CD4-positive, alpha-beta memory T cell (primary cell): ENCODE measurements at regions of chr6 and their contacts with region 1.

Region 1: GRCh38 chr6:157034436-157035230 is 257.5 kb downstream of the ARID1B start:
- DNase-seq: peak in 4 of 5 donors; percentile 32 to 50 (median 42)
- H3K4me3 ChIP-seq: no peak overlapping the region
- H3K4me3 Mint-ChIP-seq: peak overlapping the region; percentile 64 to 99 (median 73)
- H3K27ac ChIP-seq: no peak overlapping the region
- H3K27ac Mint-ChIP-seq: peak overlapping the region in 6 of 7 donors; percentile 19 to 98 (median 76)
- H3K4me1 ChIP-seq: peaks cover 26% of the 10 kb centered on the region
- H3K4me1 Mint-ChIP-seq: peaks cover 14 to 28% (median 25%) of the 10 kb centered on the region in 4 donors
- H3K27me3 ChIP-seq: no peaks in the 10 kb centered on the region
- H3K27me3 Mint-ChIP-seq: no peaks in the 10 kb centered on the region

Region 2: DNA sequence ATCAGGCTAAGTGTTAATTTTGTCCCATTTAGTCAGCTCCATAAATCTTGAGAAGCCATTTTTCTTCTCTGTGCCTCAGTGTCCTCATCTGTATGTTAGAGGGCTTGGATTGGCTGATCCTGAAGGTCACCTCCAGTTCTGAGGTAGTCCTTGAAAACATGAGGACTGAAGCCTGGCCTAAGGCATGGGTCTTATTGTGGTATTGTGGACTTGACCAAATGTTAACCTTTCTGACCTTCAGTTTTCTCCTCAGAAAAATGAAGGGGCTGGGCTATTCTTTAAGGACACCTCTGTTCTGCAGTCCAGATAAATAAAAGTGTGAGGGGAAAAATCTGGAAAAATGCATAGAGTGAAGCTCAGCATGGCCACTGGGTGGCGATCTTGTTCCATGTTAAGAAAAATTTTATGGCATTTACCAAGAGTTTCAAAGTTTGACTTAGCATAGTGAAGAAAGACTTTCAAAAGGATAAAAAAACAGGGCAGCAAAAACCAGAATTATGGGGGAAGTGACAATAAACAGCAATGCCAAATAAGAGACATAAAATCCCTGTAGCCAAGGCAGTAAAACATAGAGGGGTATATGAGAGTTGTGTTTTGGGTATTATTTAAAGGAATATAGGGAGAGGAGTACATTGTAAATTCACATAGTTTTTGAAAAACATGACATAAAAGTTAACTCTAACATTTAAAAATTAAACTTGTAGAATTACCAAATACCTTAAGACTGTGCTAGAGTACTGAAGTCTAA is 1707.1 kb before region 1 on chr6:
- CTCF ChIA-PET with region 1: no interaction called
- POLR2A ChIA-PET with region 1: no interaction called
- intact Hi-C with region 1: loop called (anchors 5 kb)
- DNase-seq: peak; percentile 47 to 65 (median 62)
- H3K4me3 ChIP-seq: no peak overlapping the region
- H3K4me3 Mint-ChIP-seq: no peak overlapping the region
- H3K27ac ChIP-seq: no peak overlapping the region
- H3K27ac Mint-ChIP-seq: peak overlapping the region in 2 of 7 donors; percentile 0 to 64
- H3K4me1 ChIP-seq: no peaks in the 10 kb centered on the region
- H3K4me1 Mint-ChIP-seq: peaks cover 0 to 5% (median 3%) of the 10 kb centered on the region in 4 donors
- H3K27me3 ChIP-seq: no peaks in the 10 kb centered on the region
- H3K27me3 Mint-ChIP-seq: peaks cover 0 to 1% of the 10 kb centered on the region in 2 donors

Region 3: DNA sequence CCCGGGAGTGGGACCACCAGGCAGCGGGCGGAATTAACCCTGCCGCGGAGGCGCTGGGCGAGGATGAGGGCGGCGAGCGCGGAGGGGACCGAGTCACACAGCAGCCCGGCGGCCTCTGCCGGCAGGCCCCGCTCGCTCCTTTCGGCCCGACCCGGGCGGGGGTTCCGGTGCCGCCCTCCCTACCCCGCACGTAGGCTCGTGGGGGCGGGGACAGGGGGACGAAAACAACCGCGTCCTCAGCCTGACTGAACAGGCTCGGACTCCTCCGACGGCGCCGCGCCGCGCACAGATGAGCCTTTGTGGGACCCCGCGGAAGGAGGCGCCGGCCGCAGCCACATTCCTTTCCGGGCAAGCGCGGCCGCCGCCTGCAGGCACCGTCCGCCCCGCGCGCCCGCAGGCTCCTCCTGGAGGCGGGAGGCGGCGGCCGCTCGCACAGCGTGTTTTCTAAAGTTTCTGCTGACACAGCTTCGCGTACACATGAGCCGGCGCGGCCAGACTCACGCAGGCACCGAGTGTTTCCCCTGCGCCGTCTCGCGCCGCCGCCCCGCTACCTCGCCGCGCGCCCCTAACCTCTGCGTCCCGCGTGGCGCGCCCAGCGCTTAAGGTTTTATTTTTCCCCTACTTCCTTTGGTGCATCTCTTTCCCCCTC is 13.2 kb before region 1 on chr6:
- CTCF ChIA-PET with region 1: interaction called, 7 read pairs
- POLR2A ChIA-PET with region 1: interaction called, 21 read pairs
- intact Hi-C with region 1: loop called (anchors 1 kb)
- DNase-seq: peak; percentile 88 to 93 (median 91)
- H3K4me3 ChIP-seq: peak overlapping the region; percentile 54 to 86
- H3K4me3 Mint-ChIP-seq: peak overlapping the region; percentile 95 to 98 (median 96)
- H3K27ac ChIP-seq: peak overlapping the region; percentile 98
- H3K27ac Mint-ChIP-seq: peak overlapping the region; percentile 97 to 100 (median 99)
- H3K4me1 ChIP-seq: peaks cover 31% of the 10 kb centered on the region
- H3K4me1 Mint-ChIP-seq: peaks cover 30 to 55% (median 44%) of the 10 kb centered on the region in 4 donors
- H3K27me3 ChIP-seq: no peaks in the 10 kb centered on the region
- H3K27me3 Mint-ChIP-seq: no peaks in the 10 kb centered on the region

Region 4: GRCh38 chr6:157045831-157046454 is 11.3 kb after region 1 on chr6:
- CTCF ChIA-PET with region 1: interaction called, 12 read pairs
- POLR2A ChIA-PET with region 1: interaction called, 6 read pairs
- intact Hi-C with region 1: no loop called
- DNase-seq: no peak
- H3K4me3 ChIP-seq: no peak overlapping the region
- H3K4me3 Mint-ChIP-seq: no peak overlapping the region
- H3K27ac ChIP-seq: no peak overlapping the region
- H3K27ac Mint-ChIP-seq: no peak overlapping the region
- H3K4me1 ChIP-seq: no peaks in the 10 kb centered on the region
- H3K4me1 Mint-ChIP-seq: peaks cover 9 to 15% (median 12%) of the 10 kb centered on the region in 4 donors
- H3K27me3 ChIP-seq: no peaks in the 10 kb centered on the region
- H3K27me3 Mint-ChIP-seq: no peaks in the 10 kb centered on the region

Region 5: GRCh38 chr6:157099912-157100593 is 65.4 kb after region 1 on chr6:
- CTCF ChIA-PET with region 1: interaction called, 3 read pairs
- POLR2A ChIA-PET with region 1: no interaction called
- intact Hi-C with region 1: loop called (anchors 1 kb)
- DNase-seq: peak; percentile 49 to 68 (median 59)
- H3K4me3 ChIP-seq: peak overlapping the region in 1 of 2 donors; percentile 0
- H3K4me3 Mint-ChIP-seq: peak overlapping the region; percentile 60 to 81 (median 77)
- H3K27ac ChIP-seq: peak overlapping the region; percentile 44
- H3K27ac Mint-ChIP-seq: peak overlapping the region; percentile 88 to 96 (median 94)
- H3K4me1 ChIP-seq: peaks cover 41% of the 10 kb centered on the region
- H3K4me1 Mint-ChIP-seq: peaks cover 42 to 77% (median 59%) of the 10 kb centered on the region in 4 donors
- H3K27me3 ChIP-seq: no peaks in the 10 kb centered on the region
- H3K27me3 Mint-ChIP-seq: no peaks in the 10 kb centered on the region

Region 6: DNA sequence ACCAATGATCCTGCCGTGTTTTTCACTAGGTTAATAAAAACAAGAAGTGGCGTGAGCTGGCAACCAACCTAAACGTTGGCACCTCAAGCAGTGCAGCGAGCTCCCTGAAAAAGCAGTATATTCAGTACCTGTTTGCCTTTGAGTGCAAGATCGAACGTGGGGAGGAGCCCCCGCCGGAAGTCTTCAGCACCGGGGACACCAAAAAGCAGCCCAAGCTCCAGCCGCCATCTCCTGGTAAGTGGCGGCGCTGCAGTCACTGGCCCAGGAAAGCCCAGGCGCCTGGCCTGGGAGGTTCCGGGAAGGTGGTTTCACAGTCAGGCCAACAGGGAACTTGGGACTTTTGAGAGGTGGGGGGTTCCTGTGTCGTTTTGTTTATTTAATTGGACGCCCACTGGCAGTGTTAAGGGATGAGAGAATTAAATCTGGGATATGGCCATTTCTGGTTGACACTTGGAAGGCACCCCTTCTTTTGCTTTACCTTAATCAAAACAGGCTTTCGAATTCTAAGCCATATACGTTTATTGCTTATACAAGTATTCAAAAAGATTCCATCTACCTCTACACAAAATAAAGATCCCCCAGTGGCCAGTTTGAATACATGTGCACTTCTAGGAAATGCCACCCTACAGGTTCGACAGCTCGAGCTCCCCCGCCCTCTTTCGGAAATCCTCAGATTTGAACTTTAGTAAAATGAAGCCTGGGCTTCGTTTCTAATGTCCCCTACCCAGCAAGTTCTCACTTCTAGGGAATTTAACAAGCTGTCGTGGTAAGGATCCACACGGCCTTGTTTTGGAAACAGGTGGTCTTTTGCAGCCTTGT is 149.8 kb after region 1 on chr6:
- CTCF ChIA-PET with region 1: interaction called, 4 read pairs
- POLR2A ChIA-PET with region 1: interaction called, 3 read pairs
- intact Hi-C with region 1: loop called (anchors 1 kb)
- DNase-seq: peak; percentile 55 to 60 (median 58)
- H3K4me3 ChIP-seq: no peak overlapping the region
- H3K4me3 Mint-ChIP-seq: peak overlapping the region in 4 of 8 donors; percentile 32 to 43 (median 38)
- H3K27ac ChIP-seq: no peak overlapping the region
- H3K27ac Mint-ChIP-seq: peak overlapping the region in 4 of 7 donors; percentile 59 to 70 (median 62)
- H3K4me1 ChIP-seq: peaks cover 18% of the 10 kb centered on the region
- H3K4me1 Mint-ChIP-seq: peaks cover 11 to 36% (median 23%) of the 10 kb centered on the region in 4 donors
- H3K27me3 ChIP-seq: no peaks in the 10 kb centered on the region
- H3K27me3 Mint-ChIP-seq: no peaks in the 10 kb centered on the region